Activated CD4-positive, alpha-beta memory T cell treated with anti-CD3 and anti-CD28 coated beads, Interleukin-2, amount 10 ng/mL, durations not matched to agents 7 days and 5 days (primary cell): ENCODE measurements at regions of chr20 and their contacts with region 1.

Region 1: DNA sequence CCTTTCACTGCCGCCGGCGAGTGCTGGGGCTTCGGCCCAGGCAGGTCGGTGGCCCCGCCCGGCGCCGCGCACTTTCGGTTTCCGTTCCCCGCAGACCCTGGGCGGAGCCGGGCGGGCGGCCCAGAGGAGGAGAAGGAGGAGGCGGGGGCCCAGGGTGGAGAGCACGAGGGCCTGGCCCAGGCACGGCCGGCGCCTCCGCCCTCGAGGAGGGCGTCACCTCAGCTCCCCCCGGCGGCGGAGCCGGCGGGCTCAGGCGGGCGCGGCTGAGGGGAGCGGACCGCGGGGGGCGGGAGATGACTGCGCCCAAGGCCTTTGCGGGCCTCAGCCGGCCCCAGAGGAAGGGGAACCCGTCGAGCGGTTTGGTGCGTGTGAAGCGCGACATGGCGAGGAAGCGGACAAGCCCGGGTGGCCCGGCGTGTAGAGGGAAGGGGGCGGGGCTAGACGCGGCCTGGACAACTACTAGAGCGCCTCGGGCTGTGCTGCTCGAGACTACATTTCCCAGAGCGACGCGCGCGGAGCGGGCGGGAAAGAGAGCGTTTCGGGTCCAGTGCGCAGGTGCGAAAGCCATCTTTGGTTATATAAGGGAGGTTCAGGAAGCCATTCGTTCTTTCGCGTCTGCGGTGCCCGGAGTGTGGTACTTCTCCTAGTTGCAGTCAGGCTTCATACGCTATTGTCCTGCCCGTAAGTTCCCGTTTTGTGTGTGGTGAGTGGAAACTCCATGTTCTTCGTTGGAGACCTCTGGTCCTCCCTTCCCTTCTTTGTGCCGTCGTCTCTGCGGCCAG is at the start of gene ZNFX1:
- DNase-seq: peak; percentile 99
- H3K4me3 Mint-ChIP-seq: peak within 1 kb of the TSS; percentile 100
- H3K27ac Mint-ChIP-seq: peak within 1 kb of the TSS; percentile 98
- H3K4me1 Mint-ChIP-seq: peaks cover 58% of the 10 kb centered on the region
- H3K27me3 Mint-ChIP-seq: no peaks in the 10 kb centered on the region
- total RNA-seq, gene ZNFX1: 88.7 to 89.5 TPM

Region 2: DNA sequence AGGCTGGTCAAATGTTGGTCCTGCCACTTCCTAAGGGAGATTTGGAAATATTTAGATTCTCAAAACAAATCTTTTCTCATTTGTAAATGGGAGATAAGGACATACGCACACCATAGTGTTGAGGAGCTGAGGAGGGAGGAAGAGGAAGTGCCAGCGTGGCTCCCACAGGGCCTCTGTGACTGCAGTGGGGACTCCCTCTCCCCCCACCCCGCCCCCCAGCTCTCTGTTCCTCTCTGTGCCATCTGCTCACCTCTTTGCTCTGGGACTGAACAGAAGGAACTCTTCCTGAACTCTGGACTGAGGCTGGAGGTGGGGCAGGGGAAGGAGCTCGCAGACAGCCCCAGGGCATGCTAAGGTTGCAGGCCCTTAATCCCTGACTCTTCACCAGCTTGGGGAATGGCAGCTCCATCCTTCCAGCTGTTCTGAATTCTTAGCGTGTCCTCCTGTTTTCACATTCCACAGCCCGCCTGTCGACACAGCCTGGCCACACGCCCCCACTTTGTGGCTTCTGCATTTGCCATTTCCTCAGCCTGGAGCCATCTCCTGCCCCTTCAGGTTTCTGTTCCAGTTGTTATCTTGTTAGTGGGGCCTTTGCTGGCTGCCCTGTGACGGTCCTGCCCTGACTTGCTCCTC is 47.5 kb before region 1 on chr20:
- CTCF ChIA-PET with region 1: no interaction called
- POLR2A ChIA-PET with region 1: no interaction called
- DNase-seq: no peak
- H3K4me3 Mint-ChIP-seq: no peak overlapping the region
- H3K27ac Mint-ChIP-seq: no peak overlapping the region
- H3K4me1 Mint-ChIP-seq: no peaks in the 10 kb centered on the region
- H3K27me3 Mint-ChIP-seq: no peaks in the 10 kb centered on the region

Region 3: DNA sequence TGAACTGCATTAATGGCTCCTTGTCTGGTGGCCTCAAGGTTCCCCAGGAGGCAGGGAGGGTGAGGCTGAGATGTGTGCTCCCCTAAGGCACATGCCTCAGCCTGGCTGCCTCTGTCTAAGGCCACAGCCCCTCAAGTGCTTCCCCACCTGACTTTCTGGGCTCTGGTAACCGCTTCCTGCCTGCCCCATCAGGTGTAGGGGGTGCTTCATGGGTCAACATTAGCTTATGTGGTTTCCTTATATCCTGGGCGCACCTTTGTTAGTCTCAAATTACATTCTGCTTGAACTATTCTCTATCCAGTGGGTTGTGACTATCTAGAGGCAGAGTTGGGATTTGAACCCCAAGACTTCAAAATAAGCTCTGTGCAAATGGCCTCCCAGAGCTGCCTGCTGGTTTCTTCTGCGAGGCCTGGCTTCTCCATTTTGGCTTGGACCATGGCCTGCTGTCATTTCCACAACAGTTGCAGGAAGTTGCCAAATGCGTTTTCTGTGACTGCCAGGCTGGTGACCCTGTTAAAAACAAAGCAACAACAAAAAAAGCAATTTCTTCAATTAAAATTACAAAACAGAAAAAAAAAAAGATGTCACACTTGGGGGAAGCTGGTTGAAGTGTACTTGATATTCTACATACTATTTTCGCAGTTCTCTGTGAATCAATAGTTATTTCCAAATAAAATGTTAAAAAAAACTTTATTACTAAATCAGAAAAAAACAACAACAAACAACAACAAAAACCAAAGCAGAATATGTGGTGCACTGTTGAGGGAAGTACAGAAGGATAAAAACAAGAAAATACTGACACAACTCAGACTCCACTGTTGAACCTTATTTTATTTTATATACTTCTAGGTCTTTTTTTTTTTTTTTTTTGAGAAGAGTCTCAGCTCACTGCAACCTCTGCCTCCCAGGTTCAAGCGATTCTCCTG is 19.6 kb after region 1 on chr20:
- CTCF ChIA-PET with region 1: interaction called, 3 read pairs
- POLR2A ChIA-PET with region 1: interaction called, 52 read pairs
- DNase-seq: no peak
- H3K4me3 Mint-ChIP-seq: no peak overlapping the region
- H3K27ac Mint-ChIP-seq: peak overlapping the region; percentile 23
- H3K4me1 Mint-ChIP-seq: peaks cover 11% of the 10 kb centered on the region
- H3K27me3 Mint-ChIP-seq: no peaks in the 10 kb centered on the region

Region 4: DNA sequence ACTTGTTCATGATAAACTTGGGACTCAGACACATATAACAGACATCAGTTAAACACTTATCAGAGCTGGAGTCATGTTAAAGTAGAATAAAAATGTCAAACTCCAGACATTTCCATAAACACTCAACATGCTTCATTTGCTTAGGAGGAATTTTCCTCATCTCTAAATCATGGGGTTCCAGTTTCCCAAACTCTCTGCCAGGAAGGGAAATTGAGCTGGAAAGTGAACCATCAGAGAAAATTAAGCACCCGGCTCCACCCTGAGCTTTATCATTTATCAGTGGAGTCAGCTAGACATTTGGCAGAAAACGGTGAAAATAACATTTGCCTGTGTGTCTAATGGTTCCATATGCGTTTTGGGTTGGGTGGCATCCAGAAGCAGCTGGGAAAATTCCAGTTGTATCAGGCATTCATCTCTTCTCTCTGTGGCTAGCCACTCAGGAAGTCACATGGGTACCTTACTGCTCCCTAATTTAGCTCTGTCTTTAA is 24.9 kb after region 1 on chr20:
- CTCF ChIA-PET with region 1: no interaction called
- POLR2A ChIA-PET with region 1: interaction called, 11 read pairs
- DNase-seq: no peak
- H3K4me3 Mint-ChIP-seq: no peak overlapping the region
- H3K27ac Mint-ChIP-seq: no peak overlapping the region
- H3K4me1 Mint-ChIP-seq: peaks cover 16% of the 10 kb centered on the region
- H3K27me3 Mint-ChIP-seq: no peaks in the 10 kb centered on the region

Region 5: DNA sequence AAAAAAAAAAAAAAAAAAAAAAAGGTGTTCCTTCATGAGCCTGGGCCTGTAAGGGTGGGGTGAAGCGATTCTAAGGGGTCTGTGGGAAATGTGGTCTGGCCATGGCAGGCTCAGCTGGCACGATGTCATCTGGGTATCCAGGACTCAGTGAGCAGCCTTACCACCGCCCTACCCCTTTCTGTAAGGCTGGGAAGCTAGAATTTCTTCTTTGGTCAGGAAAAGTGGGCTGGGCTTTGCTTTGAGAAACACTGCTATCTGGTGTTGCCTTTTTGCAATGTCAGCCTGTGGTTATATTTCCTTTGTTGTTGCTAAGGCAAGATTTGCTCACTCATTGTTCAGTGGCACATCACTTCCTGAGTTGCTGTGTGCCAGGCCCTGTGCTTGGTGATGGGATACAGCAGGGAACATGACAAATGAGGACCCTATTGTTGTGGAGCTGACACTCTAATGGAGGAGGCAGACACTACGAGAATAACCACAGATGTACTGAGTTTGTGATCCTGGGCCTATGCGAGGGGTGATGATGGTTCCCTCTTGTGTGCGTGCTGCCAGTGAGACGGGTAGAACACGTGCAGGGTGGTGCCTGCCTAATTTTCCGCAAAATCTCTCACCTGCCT is 45.5 kb after region 1 on chr20:
- CTCF ChIA-PET with region 1: interaction called, 8 read pairs
- POLR2A ChIA-PET with region 1: interaction called, 72 read pairs
- DNase-seq: peak; percentile 55
- H3K4me3 Mint-ChIP-seq: peak overlapping the region; percentile 29
- H3K27ac Mint-ChIP-seq: peak overlapping the region; percentile 74
- H3K4me1 Mint-ChIP-seq: peaks cover 38% of the 10 kb centered on the region
- H3K27me3 Mint-ChIP-seq: peaks cover 46% of the 10 kb centered on the region

Region 6: DNA sequence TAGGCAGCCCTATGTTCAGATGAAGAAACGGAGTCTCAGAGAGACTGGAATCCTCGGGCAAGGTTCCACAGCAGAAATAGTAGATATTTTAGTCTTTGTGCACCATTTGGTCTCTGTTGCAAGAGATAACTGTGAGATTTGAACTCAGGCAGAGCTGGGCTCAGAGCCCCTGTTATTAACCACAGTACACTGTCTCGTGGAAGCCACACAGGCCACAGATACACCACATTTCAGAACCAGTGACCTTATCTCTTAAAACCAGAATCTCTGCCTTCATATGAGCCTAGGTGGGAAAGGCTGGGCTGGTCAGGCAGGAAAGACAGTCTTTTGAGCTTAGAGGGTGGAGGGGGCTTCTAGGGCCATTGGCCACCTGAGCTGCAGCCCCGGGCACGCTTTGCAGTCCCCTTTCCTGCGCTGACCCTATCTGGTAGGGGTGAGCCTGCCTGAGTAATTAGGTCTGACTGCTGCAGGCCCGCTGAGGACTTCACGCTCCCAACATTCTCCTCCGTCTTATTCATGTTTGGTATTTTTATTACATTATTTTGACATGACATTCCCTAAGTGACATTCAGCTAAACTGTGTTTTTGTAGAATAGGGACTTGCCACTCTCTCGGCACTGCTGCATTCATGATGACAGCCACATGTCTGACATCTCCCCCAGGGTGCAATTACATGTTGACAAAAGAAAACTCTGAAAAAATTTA is 133.1 kb after region 1 on chr20:
- CTCF ChIA-PET with region 1: no interaction called
- POLR2A ChIA-PET with region 1: no interaction called
- DNase-seq: no peak
- H3K4me3 Mint-ChIP-seq: no peak overlapping the region
- H3K27ac Mint-ChIP-seq: no peak overlapping the region
- H3K4me1 Mint-ChIP-seq: no peaks in the 10 kb centered on the region
- H3K27me3 Mint-ChIP-seq: peaks cover 41% of the 10 kb centered on the region

Region 7: GRCh38 chr20:49447946-49448809 is 170.0 kb after region 1 on chr20:
- CTCF ChIA-PET with region 1: no interaction called
- POLR2A ChIA-PET with region 1: no interaction called
- DNase-seq: no peak
- H3K4me3 Mint-ChIP-seq: no peak overlapping the region
- H3K27ac Mint-ChIP-seq: no peak overlapping the region
- H3K4me1 Mint-ChIP-seq: no peaks in the 10 kb centered on the region
- H3K27me3 Mint-ChIP-seq: peaks cover 38% of the 10 kb centered on the region

Region 8: GRCh38 chr20:49516916-49517789 is 238.9 kb after region 1 on chr20:
- CTCF ChIA-PET with region 1: no interaction called
- POLR2A ChIA-PET with region 1: no interaction called
- DNase-seq: no peak
- H3K4me3 Mint-ChIP-seq: no peak overlapping the region
- H3K27ac Mint-ChIP-seq: no peak overlapping the region
- H3K4me1 Mint-ChIP-seq: no peaks in the 10 kb centered on the region
- H3K27me3 Mint-ChIP-seq: peaks cover 30% of the 10 kb centered on the region